ENCODE measurements at regions of chr18 and their contacts with region 1.

Region 1: DNA sequence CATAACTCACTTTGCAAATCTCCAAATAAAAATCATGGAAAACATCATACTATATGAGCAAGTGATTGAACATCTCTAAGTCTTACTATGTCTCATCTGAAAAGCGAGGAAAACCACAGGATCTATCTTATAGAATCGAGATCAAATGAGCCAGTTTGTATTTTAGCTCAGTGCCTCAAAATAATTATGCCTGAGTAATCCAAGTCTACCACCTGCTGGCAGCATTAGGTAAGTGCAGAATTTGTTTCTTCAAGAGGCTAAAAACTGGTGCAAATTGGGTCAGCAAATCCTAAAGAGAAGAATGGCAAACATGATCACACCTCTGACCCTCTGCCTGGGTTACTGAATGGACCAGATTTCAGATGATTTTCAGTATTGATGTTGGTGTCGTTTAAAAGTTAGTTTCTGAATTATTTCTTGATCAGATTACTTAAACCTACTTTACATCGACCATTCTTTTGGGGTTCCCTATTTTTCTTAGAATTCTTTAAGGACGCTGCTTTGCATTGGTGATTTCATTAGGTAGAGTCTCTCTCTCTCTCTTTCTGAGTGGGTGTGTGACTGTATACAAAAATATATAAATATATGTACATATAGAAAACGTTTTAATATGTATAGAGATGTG is 12.7 kb upstream of the FHOD3 start:
- DNase-seq: no peak
- H3K4me3 ChIP-seq: no peak overlapping the region
- H3K27ac ChIP-seq: no peak overlapping the region
- H3K4me1 ChIP-seq: no peaks in the 10 kb centered on the region
- H3K27me3 ChIP-seq: peaks cover 46% of the 10 kb centered on the region
- CTCF ChIP-seq: peak; percentile 92

Region 2: DNA sequence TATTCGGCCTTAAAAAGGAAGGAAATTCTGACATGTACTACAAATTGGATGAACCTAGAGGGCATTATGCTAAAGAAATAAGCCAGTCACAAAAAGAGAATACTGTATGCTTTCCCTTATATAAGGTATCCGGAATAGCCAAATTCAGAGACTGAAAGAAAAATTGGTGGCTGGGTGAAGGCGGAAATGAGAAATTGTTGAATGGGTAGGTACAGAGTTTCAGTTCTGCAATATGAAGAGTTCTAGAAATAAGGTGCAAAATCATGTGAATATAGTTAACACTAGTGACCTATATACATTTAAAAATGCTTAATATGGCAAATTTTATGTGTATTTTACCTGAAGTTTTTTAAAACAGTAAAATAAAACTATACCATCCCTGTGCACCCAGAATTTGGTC is 269.2 kb before region 1 on chr18:
- intact Hi-C with region 1: loop called (anchors 2 kb)
- DNase-seq: no peak
- H3K4me3 ChIP-seq: no peak overlapping the region
- H3K27ac ChIP-seq: no peak overlapping the region
- H3K4me1 ChIP-seq: peaks cover 6% of the 10 kb centered on the region
- H3K27me3 ChIP-seq: no peaks in the 10 kb centered on the region
- CTCF ChIP-seq: no peak

Region 3: GRCh38 chr18:36095936-36096519 is 188.8 kb before region 1 on chr18:
- intact Hi-C with region 1: loop called (anchors 2 kb)
- DNase-seq: no peak
- H3K4me3 ChIP-seq: no peak overlapping the region
- H3K27ac ChIP-seq: no peak overlapping the region
- H3K4me1 ChIP-seq: no peaks in the 10 kb centered on the region
- H3K27me3 ChIP-seq: no peaks in the 10 kb centered on the region
- CTCF ChIP-seq: peak; percentile 72

Region 4: DNA sequence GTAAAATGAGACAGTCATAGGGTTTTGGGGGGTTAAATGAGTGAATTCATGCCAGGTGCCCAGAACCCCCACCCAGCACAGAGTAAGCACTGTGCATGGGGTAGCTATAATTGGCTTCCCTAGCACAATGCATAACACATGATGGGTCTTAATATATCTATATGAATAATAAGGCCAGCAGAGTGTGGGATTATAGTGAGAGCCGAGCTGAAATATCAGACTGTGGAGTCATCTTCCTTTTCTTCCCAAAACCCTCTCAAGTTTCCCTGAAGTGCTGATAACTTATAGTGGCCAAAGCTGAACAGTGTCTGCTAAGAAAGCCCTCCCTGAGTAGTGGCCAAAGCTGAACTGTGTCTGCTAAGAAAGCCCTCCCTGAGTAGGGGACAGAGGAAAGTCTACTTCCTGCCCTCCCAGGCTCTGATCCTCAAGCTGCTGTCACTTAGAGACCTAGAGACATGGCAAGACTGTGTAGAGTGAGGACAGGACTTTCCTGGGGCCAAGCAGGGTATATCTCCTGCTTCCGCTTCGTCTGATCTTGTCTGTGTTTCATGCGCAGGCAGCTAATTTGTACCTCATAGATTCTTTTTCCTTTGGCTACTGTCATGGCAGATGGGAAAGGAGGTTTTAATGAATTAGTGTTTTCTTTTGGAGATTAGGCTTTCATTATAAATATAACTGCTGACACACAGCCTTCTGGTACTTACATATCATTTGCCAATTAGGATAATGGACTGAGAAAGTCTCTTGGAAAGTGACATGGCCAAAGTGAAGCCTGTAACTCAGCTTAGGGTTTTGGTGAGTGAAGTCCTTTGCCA is 107.6 kb after region 1 on chr18:
- intact Hi-C with region 1: no loop called
- DNase-seq: no peak
- H3K4me3 ChIP-seq: no peak overlapping the region
- H3K27ac ChIP-seq: peak overlapping the region; percentile 90
- H3K4me1 ChIP-seq: peaks cover 78% of the 10 kb centered on the region
- H3K27me3 ChIP-seq: no peaks in the 10 kb centered on the region
- CTCF ChIP-seq: no peak

Measured in left ventricle myocardium inferior (tissue), 1 donor.